ENCODE measurements at regions of chr5 and their contacts with region 1.

Region 1: DNA sequence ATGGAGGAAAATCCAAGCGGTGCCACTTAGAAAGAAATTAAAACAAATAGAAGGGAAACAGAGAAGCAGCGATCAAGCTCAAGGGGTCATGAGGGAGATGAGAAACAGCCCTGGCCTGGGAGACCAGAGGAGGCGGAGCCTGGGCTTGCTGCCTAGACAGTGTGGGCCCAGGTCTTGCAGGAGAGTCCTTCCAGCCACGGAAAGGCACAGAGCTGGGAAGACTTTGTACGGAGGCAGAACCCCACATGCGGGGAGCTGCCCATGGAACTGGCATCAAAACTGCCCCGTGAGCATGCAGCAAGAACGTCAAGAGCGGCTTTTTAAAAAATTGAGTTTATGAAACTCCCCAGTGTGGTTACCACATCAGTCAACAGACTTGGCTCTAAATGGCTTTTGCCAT is 119.4 kb downstream of the IRX1 start:
- DNase-seq: no peak

Region 2: DNA sequence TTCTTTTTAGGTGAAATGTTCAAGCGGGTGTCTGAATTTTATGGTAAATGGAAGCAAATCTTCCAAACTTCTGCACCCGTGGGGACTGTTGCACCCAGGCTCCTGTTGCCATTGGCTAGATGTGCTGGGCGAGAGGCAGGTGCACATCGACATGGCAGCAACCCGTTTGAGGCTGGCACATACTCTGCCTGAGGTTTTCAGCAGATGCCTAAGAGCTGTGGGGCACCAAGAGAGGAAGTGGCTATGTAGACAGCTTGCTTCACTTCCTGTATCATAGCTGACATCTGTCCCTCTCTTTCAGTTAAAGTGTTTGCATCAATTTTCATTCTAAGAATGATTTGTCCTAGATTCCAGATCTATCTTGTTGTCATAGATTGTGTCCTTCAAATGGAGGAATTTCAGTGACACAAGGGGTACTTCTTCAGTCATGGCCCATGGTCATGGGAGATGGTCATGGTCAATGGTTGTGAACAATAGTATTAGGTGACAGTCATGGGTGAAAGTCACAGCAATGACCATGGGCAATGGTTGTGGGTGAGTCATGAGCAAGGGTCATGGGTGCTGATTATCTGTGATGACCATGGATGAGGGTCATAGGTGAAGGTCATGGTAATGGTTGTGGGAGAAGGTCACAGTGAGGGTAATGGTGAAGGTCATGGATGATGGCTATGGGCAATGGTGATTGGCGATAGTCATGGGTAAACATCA is 1717.3 kb before region 1 on chr5:
- intact Hi-C with region 1: loop called in 1 of 2 experiments (anchors 5 kb)
- DNase-seq: no peak

Region 3: GRCh38 chr5:3020426-3020825 is 694.6 kb before region 1 on chr5:
- intact Hi-C with region 1: no loop called
- DNase-seq: no peak

Region 4: DNA sequence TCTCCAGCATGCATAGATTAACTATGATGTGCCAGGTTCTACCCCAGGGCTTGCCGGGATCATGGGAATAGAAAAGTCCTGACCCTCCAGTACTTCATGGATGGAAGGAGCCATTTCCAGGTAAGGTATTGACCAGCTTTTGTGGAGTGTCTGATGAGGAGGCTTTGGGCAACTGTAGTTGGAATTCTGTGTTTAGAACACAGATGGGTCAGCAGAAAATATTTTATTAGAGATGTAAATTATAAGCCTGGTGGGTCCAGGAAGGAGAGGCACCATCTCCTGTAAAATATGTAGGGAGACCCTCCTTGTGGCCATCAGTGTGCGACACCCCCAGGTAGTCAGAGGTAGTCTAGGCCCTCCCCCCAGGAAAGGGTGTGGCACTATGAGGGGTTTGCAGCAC is 36.8 kb after region 1 on chr5:
- intact Hi-C with region 1: no loop called
- DNase-seq: no peak

Measured in posterior vena cava (tissue), 2 donors.